A549 (cell line): ENCODE measurements at regions of chr2 and their contacts with region 1.

Region 1: GRCh38 chr2:219245148-219245898 is at the starts of genes GLB1L and STK16:
- DNase-seq: peak; percentile 94
- ATAC-seq: peak; percentile 64 to 82
- H3K4me3 ChIP-seq: peak within 1 kb of the TSS; percentile 78
- H3K27ac ChIP-seq: peak within 1 kb of the TSS; percentile 90 to 96
- H3K4me1 ChIP-seq: peaks cover 50% of the 10 kb centered on the region
- CTCF ChIP-seq: no peak
- EP300 ChIP-seq: no peak
- POLR2A ChIP-seq: peak; percentile 74
- RAD21 ChIP-seq: no peak; a peak in 1 of 5 replicates
- polyA plus RNA-seq, gene GLB1L: 8.7 and 10.0 TPM in 2 replicates
- polyA plus RNA-seq, gene STK16: 43.3 and 53.0 TPM in 2 replicates

Region 2: DNA sequence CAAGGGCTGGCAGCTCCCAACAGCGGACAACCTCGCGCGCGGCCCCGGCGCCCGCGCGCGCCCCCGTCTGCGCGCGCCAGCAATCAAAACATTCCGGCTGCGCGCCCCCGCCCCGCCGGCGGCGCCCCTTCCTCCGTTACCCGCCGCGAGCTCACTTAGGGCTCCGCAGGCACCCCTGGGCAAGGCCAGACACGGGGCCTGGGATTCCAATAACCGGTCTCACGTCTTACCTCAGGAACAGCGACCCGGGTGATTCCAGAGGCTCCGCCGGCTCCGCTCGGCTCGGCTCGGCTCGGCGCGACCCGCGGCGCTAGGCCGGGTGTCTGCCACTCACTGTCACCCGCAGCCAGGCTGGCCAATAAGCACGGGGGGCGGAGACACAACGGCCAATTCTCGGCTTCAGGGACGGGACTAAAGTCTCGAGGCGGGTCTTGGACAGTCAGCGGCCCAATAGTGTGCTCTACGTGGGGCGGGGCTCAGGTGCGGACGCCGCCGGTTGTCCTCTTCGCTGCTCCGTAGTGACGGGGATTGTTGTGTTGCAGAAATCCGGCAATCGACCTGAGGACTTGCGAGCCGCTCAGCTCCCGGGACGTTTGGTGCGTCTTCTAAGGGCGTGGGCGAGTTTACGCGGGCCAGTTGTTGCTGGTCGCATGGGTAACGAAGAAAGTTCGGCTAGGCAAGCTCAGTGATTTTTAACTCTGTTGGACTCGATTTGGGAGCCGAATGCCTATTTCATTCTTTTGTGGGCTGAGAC is 15.8 kb before region 1 on chr2 and contains the starts of genes ANKZF1 and ATG9A:
- CTCF ChIA-PET with region 1: interaction called, 8 read pairs
- POLR2A ChIA-PET with region 1: interaction called, 19 read pairs
- DNase-seq: peak; percentile 97 to 99
- ATAC-seq: peak; percentile 96 to 99
- H3K4me3 ChIP-seq: peak within 1 kb of the TSS; percentile 85
- H3K27ac ChIP-seq: peak within 1 kb of the TSS; percentile 82 to 95
- H3K4me1 ChIP-seq: peaks cover 19% of the 10 kb centered on the region
- CTCF ChIP-seq: no peak
- EP300 ChIP-seq: no peak
- POLR2A ChIP-seq: peak; percentile 53
- RAD21 ChIP-seq: no peak; a peak in 1 of 5 replicates
- polyA plus RNA-seq, gene ANKZF1: 29.5 and 30.3 TPM in 2 replicates
- polyA plus RNA-seq, gene ATG9A: 75.2 and 115 TPM in 2 replicates